ENCODE measurements at regions of chr13 and their contacts with region 1.

Region 1: GRCh38 chr13:26707122-26708006 is 53.2 kb downstream of the GPR12 start:
- DNase-seq: no peak
- ATAC-seq: peak; percentile 59

Region 2: GRCh38 chr13:26872525-26873385 is 165.4 kb after region 1 on chr13:
- intact Hi-C with region 1: loop called (anchors 1 kb)
- DNase-seq: peak; percentile 64
- ATAC-seq: no peak

Region 3: GRCh38 chr13:26929971-26930730 is 222.8 kb after region 1 on chr13:
- intact Hi-C with region 1: loop called (anchors 1 kb)
- DNase-seq: peak; percentile 86
- ATAC-seq: peak; percentile 46

Measured in Right ventricle myocardium inferior (tissue), 1 donor.